ENCODE measurements at regions of chr4 and their contacts with region 1.

Region 1: GRCh38 chr4:105741548-105741947 is 33.0 kb downstream of the GSTCD start:
- DNase-seq: no peak
- ATAC-seq: no peak
- H3K4me3 ChIP-seq: no peak overlapping the region
- H3K4me3 Mint-ChIP-seq: no peak overlapping the region
- H3K27ac ChIP-seq: no peak overlapping the region
- H3K27ac Mint-ChIP-seq: no peak overlapping the region
- H3K4me1 ChIP-seq: no peaks in the 10 kb centered on the region
- H3K4me1 Mint-ChIP-seq: no peaks in the 10 kb centered on the region
- H3K27me3 ChIP-seq: no peaks in the 10 kb centered on the region
- H3K27me3 Mint-ChIP-seq: no peaks in the 10 kb centered on the region

Region 2: DNA sequence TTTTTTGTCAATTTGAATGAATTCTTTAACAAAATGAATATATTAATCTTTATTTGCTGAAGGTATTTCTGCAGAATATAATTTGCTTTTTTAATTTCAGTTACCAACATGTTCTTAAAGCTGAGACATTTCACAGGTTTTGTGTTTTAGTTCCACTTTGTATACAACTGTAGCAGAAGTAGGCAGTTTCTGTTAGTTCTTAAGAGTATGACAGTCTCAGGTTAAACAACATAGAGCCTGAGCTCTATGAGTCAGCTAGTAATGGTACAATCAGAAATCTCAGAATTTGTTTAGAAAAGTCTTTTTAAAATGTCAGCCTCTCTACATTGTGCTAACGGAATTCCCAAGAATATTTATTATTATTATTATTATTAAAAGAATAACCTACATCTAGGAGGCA is 17.4 kb after region 1 on chr4:
- CTCF ChIA-PET with region 1: interaction called in 1 of 2 experiments, 4 read pairs
- POLR2A ChIA-PET with region 1: interaction called in 1 of 2 experiments, 14 read pairs
- DNase-seq: no peak
- ATAC-seq: no peak
- H3K4me3 ChIP-seq: no peak overlapping the region
- H3K4me3 Mint-ChIP-seq: no peak overlapping the region
- H3K27ac ChIP-seq: no peak overlapping the region
- H3K27ac Mint-ChIP-seq: no peak overlapping the region
- H3K4me1 ChIP-seq: no peaks in the 10 kb centered on the region
- H3K4me1 Mint-ChIP-seq: no peaks in the 10 kb centered on the region
- H3K27me3 ChIP-seq: no peaks in the 10 kb centered on the region
- H3K27me3 Mint-ChIP-seq: no peaks in the 10 kb centered on the region

Measured in T-cell (primary cell).